ENCODE measurements at regions of chr2 and their contacts with region 1.

Region 1: GRCh38 chr2:242098445-242099128 is 229.1 kb downstream of the RTP5 start:
- DNase-seq: no peak
- ATAC-seq: no peak
- H3K4me3 Mint-ChIP-seq: no peak overlapping the region
- H3K27ac Mint-ChIP-seq: no peak overlapping the region
- H3K4me1 Mint-ChIP-seq: no peaks in the 10 kb centered on the region
- H3K27me3 Mint-ChIP-seq: no peaks in the 10 kb centered on the region
- CTCF ChIP-seq: no peak

Region 2: GRCh38 chr2:241908686-241909420 is 189.7 kb before region 1 on chr2:
- CTCF ChIA-PET with region 1: no interaction called
- POLR2A ChIA-PET with region 1: no interaction called
- intact Hi-C with region 1: loop called (anchors 2 kb)
- DNase-seq: no peak
- ATAC-seq: no peak
- H3K4me3 Mint-ChIP-seq: no peak overlapping the region
- H3K27ac Mint-ChIP-seq: no peak overlapping the region
- H3K4me1 Mint-ChIP-seq: no peaks in the 10 kb centered on the region
- H3K27me3 Mint-ChIP-seq: no peaks in the 10 kb centered on the region
- CTCF ChIP-seq: no peak

Region 3: DNA sequence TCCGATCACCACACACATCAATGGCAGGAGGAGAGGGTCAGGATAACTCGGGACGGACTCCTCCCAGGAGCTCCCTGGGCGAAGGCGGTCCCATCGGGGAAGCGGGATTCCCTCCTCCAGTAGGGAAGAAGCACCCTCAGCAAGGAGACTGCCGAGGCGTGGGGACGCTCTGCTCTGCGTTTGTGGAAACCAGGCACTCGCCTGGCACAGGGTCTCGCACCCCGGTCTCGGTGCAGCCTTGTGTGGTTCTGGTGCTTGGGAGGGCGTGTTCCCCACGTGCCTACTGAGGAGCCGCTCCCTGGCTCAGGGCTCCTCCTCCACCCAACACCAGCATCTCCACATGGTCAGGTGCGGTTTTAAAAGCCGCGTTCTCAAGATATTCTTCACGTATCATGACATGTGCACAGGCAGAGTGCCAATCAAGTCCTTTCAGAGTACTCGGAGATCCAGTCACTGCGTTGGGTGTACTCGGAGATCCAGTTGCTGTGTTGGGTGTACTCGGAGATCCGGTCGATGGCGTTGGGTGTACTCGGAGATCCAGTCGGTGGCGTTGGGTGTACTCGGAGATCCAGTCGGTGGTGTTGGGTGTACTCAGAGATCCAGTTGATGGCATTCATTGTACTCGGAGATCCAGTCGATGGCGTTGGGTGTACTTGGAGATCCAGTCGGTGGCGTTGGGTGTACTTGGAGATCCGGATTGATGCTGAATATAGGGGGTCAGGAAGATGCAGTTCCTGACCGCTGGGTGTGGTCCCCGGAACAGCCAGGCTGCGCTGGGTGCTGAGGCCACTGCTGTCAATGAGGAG is 111.5 kb before region 1 on chr2:
- CTCF ChIA-PET with region 1: no interaction called
- POLR2A ChIA-PET with region 1: no interaction called
- intact Hi-C with region 1: no loop called
- DNase-seq: no peak
- ATAC-seq: no peak
- H3K4me3 Mint-ChIP-seq: no peak overlapping the region
- H3K27ac Mint-ChIP-seq: no peak overlapping the region
- H3K4me1 Mint-ChIP-seq: peaks cover 8% of the 10 kb centered on the region
- H3K27me3 Mint-ChIP-seq: no peaks in the 10 kb centered on the region
- CTCF ChIP-seq: no peak

Measured in activated CD8-positive, alpha-beta T cell treated with anti-CD3 and anti-CD28 coated beads for 36 hours (primary cell).